ENCODE measurements at regions of chr3 and their contacts with region 1.

Region 1: GRCh38 chr3:156151824-156152428 is 31.5 kb downstream of the KCNAB1 start:
- DNase-seq: peak; percentile 27 to 73
- ATAC-seq: peak in 2 of 3 donors; percentile 59 to 68
- H3K4me3 ChIP-seq: no peak overlapping the region
- H3K4me3 Mint-ChIP-seq: no peak overlapping the region
- H3K27ac ChIP-seq: no peak overlapping the region
- H3K27ac Mint-ChIP-seq: no peak overlapping the region
- H3K4me1 ChIP-seq: no peaks in the 10 kb centered on the region
- H3K4me1 Mint-ChIP-seq: no peaks in the 10 kb centered on the region
- H3K27me3 ChIP-seq: no peaks in the 10 kb centered on the region
- H3K27me3 Mint-ChIP-seq: peaks cover 0 to 12% of the 10 kb centered on the region in 2 donors
- CTCF ChIP-seq: peak; percentile 67

Region 2: GRCh38 chr3:156388497-156389448 is 236.8 kb after region 1 on chr3:
- intact Hi-C with region 1: no loop called
- DNase-seq: no peak
- ATAC-seq: no peak
- H3K4me3 ChIP-seq: no peak overlapping the region
- H3K4me3 Mint-ChIP-seq: no peak overlapping the region
- H3K27ac ChIP-seq: no peak overlapping the region
- H3K27ac Mint-ChIP-seq: no peak overlapping the region
- H3K4me1 ChIP-seq: no peaks in the 10 kb centered on the region
- H3K4me1 Mint-ChIP-seq: no peaks in the 10 kb centered on the region
- H3K27me3 ChIP-seq: no peaks in the 10 kb centered on the region
- H3K27me3 Mint-ChIP-seq: peaks cover 18 to 50% of the 10 kb centered on the region in 2 donors
- CTCF ChIP-seq: no peak

Region 3: DNA sequence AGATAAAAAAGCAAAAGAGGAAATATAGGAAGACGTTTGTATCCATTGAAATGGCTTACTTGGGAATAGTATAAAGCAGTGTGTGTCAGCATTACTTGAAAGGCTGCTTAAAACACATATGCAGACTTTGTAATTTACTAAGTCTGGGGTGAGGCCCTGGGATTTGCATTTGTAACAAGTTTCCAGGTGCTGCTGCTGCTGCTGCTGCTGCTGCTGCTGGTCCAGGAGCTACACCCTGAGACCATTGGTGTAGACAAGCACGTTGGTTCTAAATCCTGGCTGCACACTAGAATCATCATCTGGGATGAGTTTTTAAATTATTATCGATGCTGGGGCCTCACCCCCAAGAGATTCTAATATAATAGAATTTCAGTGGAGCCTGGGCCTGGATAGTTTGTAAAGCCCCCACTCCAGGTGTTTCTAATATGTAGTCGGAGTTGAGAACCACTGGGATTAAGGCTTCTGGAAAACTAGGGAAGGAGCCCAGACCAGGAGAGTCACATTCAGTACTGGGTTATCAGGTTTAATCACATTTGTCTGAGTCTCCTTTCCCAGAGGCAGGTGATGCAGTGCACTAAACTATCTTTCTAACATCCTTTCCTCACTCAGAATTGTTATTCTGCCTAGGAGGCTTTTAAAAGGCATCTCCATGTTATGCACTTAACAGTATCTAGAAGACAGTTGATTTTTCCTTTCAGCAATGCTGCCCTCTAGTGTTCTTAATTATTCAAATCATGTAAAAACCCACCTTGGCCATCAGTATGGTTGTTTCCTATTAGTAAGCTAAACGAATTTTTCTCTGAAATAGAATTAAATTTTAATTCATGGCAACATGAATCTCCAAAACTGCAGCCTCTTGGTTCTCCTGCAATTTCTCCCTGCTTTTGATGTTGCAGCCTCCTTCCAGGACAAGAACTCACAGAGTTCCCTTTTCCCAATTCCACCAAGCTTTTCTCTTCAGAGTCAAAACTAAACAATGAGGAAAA is 357.6 kb after region 1 on chr3:
- intact Hi-C with region 1: loop called (anchors 1 kb)
- DNase-seq: peak in 1 of 2 donors; percentile 74
- ATAC-seq: peak; percentile 77 to 92 (median 81)
- H3K4me3 ChIP-seq: no peak overlapping the region
- H3K4me3 Mint-ChIP-seq: no peak overlapping the region
- H3K27ac ChIP-seq: no peak overlapping the region
- H3K27ac Mint-ChIP-seq: no peak overlapping the region
- H3K4me1 ChIP-seq: no peaks in the 10 kb centered on the region
- H3K4me1 Mint-ChIP-seq: no peaks in the 10 kb centered on the region
- H3K27me3 ChIP-seq: no peaks in the 10 kb centered on the region
- H3K27me3 Mint-ChIP-seq: peaks cover 25 to 51% of the 10 kb centered on the region in 2 donors
- CTCF ChIP-seq: peak; percentile 75

Region 4: GRCh38 chr3:156536524-156537231 is 384.8 kb after region 1 on chr3:
- intact Hi-C with region 1: loop called (anchors 1 kb)
- DNase-seq: no peak
- ATAC-seq: no peak
- H3K4me3 ChIP-seq: no peak overlapping the region
- H3K4me3 Mint-ChIP-seq: no peak overlapping the region
- H3K27ac ChIP-seq: no peak overlapping the region
- H3K27ac Mint-ChIP-seq: no peak overlapping the region
- H3K4me1 ChIP-seq: no peaks in the 10 kb centered on the region
- H3K4me1 Mint-ChIP-seq: peaks cover 0 to 10% of the 10 kb centered on the region in 2 donors
- H3K27me3 ChIP-seq: no peaks in the 10 kb centered on the region
- H3K27me3 Mint-ChIP-seq: no peaks in the 10 kb centered on the region
- CTCF ChIP-seq: no peak

Region 5: GRCh38 chr3:157136647-157137387 is 984.9 kb after region 1 on chr3:
- intact Hi-C with region 1: loop called (anchors 1 kb)
- DNase-seq: no peak
- ATAC-seq: peak in 1 of 3 donors; percentile 9
- H3K4me3 ChIP-seq: no peak overlapping the region
- H3K4me3 Mint-ChIP-seq: no peak overlapping the region
- H3K27ac ChIP-seq: no peak overlapping the region
- H3K27ac Mint-ChIP-seq: peak overlapping the region; percentile 57 to 67
- H3K4me1 ChIP-seq: peaks cover 35% of the 10 kb centered on the region
- H3K4me1 Mint-ChIP-seq: peaks cover 21 to 22% of the 10 kb centered on the region in 2 donors
- H3K27me3 ChIP-seq: no peaks in the 10 kb centered on the region
- H3K27me3 Mint-ChIP-seq: no peaks in the 10 kb centered on the region
- CTCF ChIP-seq: no peak

Measured in natural killer cell (primary cell).